Posterior vena cava (tissue), 2 donors: ENCODE measurements at regions of chr2 and their contacts with region 1.

Region 1: GRCh38 chr2:141605163-141605562 is 525.7 kb downstream of the LRP1B start:
- DNase-seq: no peak

Region 2: DNA sequence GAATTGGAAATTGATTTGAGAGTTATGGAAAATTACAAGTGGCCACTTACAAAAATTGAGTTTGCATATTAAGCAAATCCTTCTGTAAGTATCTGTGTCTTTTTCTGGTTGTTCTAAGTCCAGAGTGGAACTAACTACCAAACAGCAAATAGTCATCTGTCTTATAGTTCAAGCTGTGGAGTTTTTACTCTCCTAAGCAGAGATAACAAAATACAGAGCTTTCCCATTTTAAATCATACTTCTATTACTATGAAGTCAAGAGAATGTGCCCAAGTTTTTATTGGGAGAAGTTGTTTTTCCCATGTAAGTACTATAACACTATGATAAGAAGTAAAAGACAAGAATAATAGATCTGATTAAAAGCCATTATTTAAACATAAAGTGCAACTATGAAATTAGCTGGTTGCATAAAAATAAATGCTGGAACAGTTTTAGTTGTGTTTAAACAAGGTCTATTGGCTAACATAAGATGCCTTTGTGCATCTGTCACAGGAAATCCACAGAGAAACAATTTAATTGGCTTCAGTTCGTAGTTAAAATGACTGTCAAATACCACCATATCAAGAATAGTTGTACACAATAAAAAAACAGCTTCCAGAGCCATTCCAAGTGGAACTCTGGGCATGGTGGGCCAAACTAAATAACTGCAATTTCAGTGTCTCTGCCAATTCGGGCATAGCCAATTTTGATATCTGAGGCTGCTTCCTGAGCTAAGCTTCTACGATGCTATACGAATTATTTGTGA is 1357.5 kb before region 1 on chr2:
- intact Hi-C with region 1: no loop called
- DNase-seq: no peak

Region 3: DNA sequence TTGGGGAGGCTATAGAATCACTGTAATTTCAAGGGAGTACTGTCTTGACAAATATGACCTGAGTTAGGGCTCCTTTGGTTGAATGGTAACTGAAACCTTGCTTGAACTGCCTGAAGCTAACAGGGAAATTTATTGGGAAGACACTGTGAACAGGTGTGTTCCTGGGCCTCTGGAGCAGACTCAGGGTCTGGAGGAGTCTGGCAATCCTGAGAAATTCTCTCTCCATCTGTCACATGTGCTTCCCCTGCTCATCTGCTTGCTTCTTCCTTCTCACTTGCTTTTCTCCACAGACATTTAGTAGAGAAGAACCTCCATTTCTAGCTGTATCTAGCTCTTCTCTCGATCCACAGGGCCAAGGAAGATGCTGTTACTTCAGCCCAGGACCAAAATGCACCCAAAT is 49.1 kb after region 1 on chr2:
- intact Hi-C with region 1: loop called in 1 of 2 experiments (anchors 2 kb)
- DNase-seq: no peak